Caco-2 (cell line): ENCODE measurements at regions of chr1 and their contacts with region 1.

Region 1: DNA sequence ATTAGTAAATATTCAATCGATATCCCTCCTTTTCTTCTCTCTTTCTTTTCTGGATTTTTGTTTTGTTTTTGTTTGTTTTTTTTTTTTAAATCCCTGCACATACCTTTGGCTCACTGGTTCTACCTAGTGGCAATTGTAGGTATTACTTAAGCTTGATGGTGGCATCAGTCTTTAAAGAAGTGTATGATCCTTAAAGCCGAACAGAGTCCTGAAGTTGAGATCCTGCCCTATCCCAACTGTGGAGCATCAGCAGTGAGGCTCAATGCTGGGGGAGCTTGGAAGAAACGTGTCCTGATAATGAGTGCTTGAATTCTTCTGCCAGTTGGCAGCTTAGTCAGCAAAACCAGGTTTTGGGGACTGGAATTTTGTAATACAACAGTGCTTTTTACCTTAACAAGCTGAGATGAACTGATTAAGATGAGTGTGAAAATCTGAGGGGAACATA is 60.8 kb downstream of the FASLG start:
- DNase-seq: peak in 1 of 2 experiments; percentile 60
- H3K4me3 ChIP-seq: no peak overlapping the region
- H3K4me3 Mint-ChIP-seq: no peak overlapping the region
- H3K27ac Mint-ChIP-seq: no peak overlapping the region
- H3K4me1 ChIP-seq: peaks cover 7% of the 10 kb centered on the region; the same call in 1 of the 2 replicates
- H3K4me1 Mint-ChIP-seq: peaks cover 20% of the 10 kb centered on the region
- H3K27me3 ChIP-seq: no peaks in the 10 kb centered on the region
- H3K27me3 Mint-ChIP-seq: no peaks in the 10 kb centered on the region
- CTCF ChIP-seq: peak; percentile 74 to 77

Region 2: DNA sequence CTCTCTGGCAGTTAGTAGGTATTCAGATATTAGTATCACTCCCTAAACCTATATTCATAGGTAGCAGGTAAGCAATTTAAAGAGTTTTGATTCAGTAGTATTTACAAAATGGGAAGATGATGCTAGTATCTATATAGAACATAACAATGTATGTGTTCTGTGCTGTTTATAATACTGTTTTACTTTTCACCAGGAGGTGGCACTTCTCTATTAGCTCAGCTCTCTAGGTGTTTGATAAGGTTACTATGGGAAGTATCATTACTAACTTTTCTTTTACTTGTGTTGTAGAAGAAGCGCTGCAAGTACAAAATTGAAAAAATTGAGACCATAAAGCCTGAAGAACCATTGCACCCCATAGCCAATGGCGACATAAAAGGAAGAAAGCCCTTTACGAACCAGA is 110.2 kb before region 1 on chr1:
- CTCF ChIA-PET with region 1: interaction called, 23 read pairs
- POLR2A ChIA-PET with region 1: no interaction called
- intact Hi-C with region 1: loop called (anchors 1 kb)
- DNase-seq: peak in 1 of 2 experiments; percentile 12
- H3K4me3 ChIP-seq: no peak overlapping the region
- H3K4me3 Mint-ChIP-seq: no peak overlapping the region
- H3K27ac Mint-ChIP-seq: no peak overlapping the region
- H3K4me1 ChIP-seq: peaks cover 4% of the 10 kb centered on the region
- H3K4me1 Mint-ChIP-seq: no peaks in the 10 kb centered on the region
- H3K27me3 ChIP-seq: no peaks in the 10 kb centered on the region
- H3K27me3 Mint-ChIP-seq: no peaks in the 10 kb centered on the region
- CTCF ChIP-seq: peak; percentile 15 to 44